Gastrocnemius medialis (tissue), 4 donors: ENCODE measurements at regions of chr12 and their contacts with region 1.

Region 1: GRCh38 chr12:64890873-64891468 is 66.5 kb downstream of the TBC1D30 start:
- DNase-seq: no peak
- ATAC-seq: peak; percentile 56 to 68
- H3K4me3 ChIP-seq: no peak overlapping the region
- H3K27ac ChIP-seq: no peak overlapping the region
- H3K4me1 ChIP-seq: no peaks in the 10 kb centered on the region
- H3K27me3 ChIP-seq: no peaks in the 10 kb centered on the region
- CTCF ChIP-seq: peak; percentile 71 to 84 (median 79)
- POLR2A ChIP-seq: no peak

Region 2: DNA sequence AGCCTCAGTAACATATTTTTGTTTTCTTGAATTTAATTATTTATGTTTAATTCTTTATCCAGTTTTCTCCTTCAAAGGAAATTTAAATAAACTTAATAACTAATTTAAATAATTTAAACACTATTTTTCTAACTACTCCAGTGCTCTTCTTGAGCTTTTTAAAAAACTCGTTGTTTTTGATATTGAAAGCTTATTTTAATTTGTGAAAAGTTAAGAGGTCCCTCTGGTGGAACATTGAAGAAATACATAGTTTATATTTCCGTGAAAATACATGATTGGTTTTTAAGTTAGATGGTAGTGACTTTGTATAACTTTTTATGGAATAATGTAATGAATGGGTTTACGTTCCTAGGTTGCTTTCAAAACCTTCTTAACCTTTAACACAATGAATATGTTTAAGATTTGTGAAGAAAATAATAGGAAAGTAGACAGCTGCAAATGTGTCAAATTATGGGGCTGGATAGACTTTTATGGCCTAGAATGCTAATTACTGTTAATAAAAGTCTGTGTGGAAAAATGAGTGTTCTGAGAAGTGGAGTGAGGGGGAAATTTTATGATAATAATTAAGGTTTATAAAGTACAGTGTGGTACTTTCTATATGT is 341.6 kb after region 1 on chr12:
- in situ Hi-C with region 1: loop called in 3 of 4 experiments (anchors 10 to 25 kb)
- intact Hi-C with region 1: loop called (anchors 5 kb)
- DNase-seq: no peak
- ATAC-seq: no peak
- H3K4me3 ChIP-seq: no peak overlapping the region
- H3K27ac ChIP-seq: no peak overlapping the region
- H3K4me1 ChIP-seq: peaks cover 0 to 8% of the 10 kb centered on the region in 2 donors
- H3K27me3 ChIP-seq: no peaks in the 10 kb centered on the region
- CTCF ChIP-seq: peak in 3 of 5 experiments; percentile 17 to 52 (median 39)
- POLR2A ChIP-seq: no peak

Region 3: GRCh38 chr12:65984227-65984479 is 1093.2 kb after region 1 on chr12:
- in situ Hi-C with region 1: no loop called
- intact Hi-C with region 1: loop called (anchors 5 kb)
- DNase-seq: no peak
- ATAC-seq: no peak
- H3K4me3 ChIP-seq: no peak overlapping the region
- H3K27ac ChIP-seq: no peak overlapping the region
- H3K4me1 ChIP-seq: no peaks in the 10 kb centered on the region
- H3K27me3 ChIP-seq: no peaks in the 10 kb centered on the region
- CTCF ChIP-seq: no peak
- POLR2A ChIP-seq: no peak

Region 4: GRCh38 chr12:66107451-66107915 is 1216.5 kb after region 1 on chr12:
- in situ Hi-C with region 1: no loop called
- intact Hi-C with region 1: loop called (anchors 2 kb)
- DNase-seq: peak; percentile 10 to 17
- ATAC-seq: peak; percentile 66 to 94
- H3K4me3 ChIP-seq: no peak overlapping the region
- H3K27ac ChIP-seq: no peak overlapping the region
- H3K4me1 ChIP-seq: peaks cover 0 to 2% of the 10 kb centered on the region in 2 donors
- H3K27me3 ChIP-seq: no peaks in the 10 kb centered on the region
- CTCF ChIP-seq: peak; percentile 35 to 84 (median 74)
- POLR2A ChIP-seq: no peak